Activated CD8-positive, alpha-beta T cell treated with anti-CD3 and anti-CD28 coated beads for 36 hours (primary cell): ENCODE measurements at regions of chr5 and their contacts with region 1.

Region 1: DNA sequence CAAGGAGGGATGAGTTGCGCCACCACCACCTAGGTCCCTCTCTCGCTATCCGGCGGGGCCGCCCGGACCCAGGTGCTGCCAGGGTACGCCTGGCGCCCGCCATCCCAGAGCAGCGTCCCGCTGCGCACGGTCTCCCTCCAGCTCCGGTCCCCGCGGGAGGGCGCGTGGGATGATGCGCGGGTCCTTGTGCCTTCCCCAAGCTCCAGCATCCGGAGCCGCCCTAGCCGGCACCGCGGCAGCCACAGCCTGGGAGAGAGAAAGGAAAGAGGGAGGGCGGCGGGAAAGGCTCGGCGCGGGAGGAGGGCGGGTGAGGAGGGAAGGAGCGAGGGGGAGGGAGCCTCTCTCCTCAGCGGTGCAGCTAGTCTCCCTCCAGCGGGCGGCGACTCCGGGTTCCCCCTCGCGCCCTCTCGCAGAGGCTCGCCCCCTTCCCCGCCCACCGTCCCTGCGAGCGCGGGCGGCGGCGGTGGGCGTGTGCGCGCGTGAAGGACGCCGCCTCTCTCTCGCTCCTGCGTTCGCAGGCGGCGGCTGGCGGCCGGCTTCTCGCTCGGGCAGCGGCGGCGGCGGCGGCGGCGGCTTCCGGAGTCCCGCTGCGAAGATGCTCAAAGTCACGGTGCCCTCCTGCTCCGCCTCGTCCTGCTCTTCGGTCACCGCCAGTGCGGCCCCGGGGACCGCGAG is at the start of gene CAMK4:
- DNase-seq: peak; percentile 74
- ATAC-seq: peak; percentile 65
- H3K4me3 Mint-ChIP-seq: peak within 1 kb of the TSS; percentile 96
- H3K27ac Mint-ChIP-seq: peak within 1 kb of the TSS; percentile 97
- H3K4me1 Mint-ChIP-seq: peaks cover 26% of the 10 kb centered on the region
- H3K27me3 Mint-ChIP-seq: no peaks in the 10 kb centered on the region
- CTCF ChIP-seq: peak; percentile 17
- total RNA-seq, gene CAMK4: 79.7 to 80.7 TPM

Region 2: GRCh38 chr5:111158105-111158744 is 65.8 kb before region 1 on chr5:
- CTCF ChIA-PET with region 1: interaction called, 12 read pairs
- POLR2A ChIA-PET with region 1: interaction called, 6 read pairs
- intact Hi-C with region 1: loop called (anchors 5 kb)
- DNase-seq: peak; percentile 90
- ATAC-seq: peak; percentile 84
- H3K4me3 Mint-ChIP-seq: no peak overlapping the region
- H3K27ac Mint-ChIP-seq: no peak overlapping the region
- H3K4me1 Mint-ChIP-seq: peaks cover 12% of the 10 kb centered on the region
- H3K27me3 Mint-ChIP-seq: peaks cover 2% of the 10 kb centered on the region
- CTCF ChIP-seq: peak; percentile 100

Region 3: DNA sequence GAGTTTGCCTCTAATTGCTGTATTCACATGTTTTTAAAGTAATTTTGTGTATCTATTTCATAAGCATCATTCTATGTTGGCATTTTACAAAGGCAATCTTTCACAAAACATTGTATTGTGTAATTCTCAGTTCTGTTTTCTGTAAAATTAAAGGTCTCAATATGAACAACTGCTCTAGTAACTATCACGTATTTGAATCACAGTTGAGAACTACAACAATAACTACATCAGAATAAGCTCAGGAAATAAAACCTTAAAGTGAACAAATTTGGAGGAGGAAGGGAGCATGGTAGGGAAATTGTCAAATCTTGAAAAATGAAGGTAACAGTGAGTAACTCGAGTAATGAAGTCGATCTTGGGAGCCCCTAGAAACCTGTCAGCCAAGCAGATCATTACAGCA is 22.3 kb before region 1 on chr5:
- CTCF ChIA-PET with region 1: interaction called, 10 read pairs
- POLR2A ChIA-PET with region 1: interaction called, 3 read pairs
- intact Hi-C with region 1: no loop called
- DNase-seq: no peak
- ATAC-seq: no peak
- H3K4me3 Mint-ChIP-seq: no peak overlapping the region
- H3K27ac Mint-ChIP-seq: no peak overlapping the region
- H3K4me1 Mint-ChIP-seq: peaks cover 18% of the 10 kb centered on the region
- H3K27me3 Mint-ChIP-seq: peaks cover 4% of the 10 kb centered on the region
- CTCF ChIP-seq: no peak

Region 4: DNA sequence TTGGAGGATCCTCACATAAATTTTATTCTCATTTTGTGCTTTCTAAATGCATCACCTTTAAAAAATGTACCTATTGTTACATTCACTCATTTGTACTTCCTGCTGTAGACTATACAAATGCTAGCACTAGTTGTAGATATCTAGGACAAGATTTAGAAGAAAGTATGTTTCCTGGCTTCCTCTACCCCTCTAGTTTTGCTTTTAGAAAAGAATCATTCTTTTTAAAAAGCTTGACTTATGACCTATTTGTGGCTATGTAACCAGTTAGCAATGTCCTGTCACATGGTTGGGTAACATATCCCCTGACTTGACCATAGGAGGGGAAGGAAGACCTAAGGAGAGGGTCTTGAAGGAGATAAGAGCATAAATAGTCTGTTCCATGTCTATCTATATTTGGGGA is 13.4 kb after region 1 on chr5:
- CTCF ChIA-PET with region 1: interaction called, 14 read pairs
- POLR2A ChIA-PET with region 1: interaction called, 46 read pairs
- intact Hi-C with region 1: loop called (anchors 1 kb)
- DNase-seq: no peak
- ATAC-seq: peak; percentile 10
- H3K4me3 Mint-ChIP-seq: peak overlapping the region; percentile 66
- H3K27ac Mint-ChIP-seq: peak overlapping the region; percentile 87
- H3K4me1 Mint-ChIP-seq: peaks cover 92% of the 10 kb centered on the region
- H3K27me3 Mint-ChIP-seq: no peaks in the 10 kb centered on the region
- CTCF ChIP-seq: no peak

Region 5: DNA sequence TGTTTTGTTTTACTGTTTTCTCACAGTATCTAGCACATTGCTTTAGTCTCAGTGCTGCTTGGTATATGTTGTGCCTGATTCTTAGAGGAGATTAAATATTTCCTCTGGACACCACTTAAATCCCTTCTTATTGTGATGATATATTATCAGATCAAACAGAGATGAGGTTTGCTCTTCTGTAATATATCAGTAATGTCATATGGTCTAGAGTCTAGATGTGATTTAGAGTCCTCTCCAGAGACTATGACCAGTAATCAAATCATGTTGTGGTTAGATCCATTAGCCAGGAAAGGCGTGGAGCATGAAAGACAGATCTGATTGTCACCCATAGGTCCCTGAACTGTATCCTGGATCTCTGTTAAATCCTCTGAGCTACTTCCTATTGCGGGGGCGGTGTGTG is 24.5 kb after region 1 on chr5:
- CTCF ChIA-PET with region 1: interaction called, 34 read pairs
- POLR2A ChIA-PET with region 1: interaction called, 176 read pairs
- intact Hi-C with region 1: no loop called
- DNase-seq: no peak
- ATAC-seq: no peak
- H3K4me3 Mint-ChIP-seq: peak overlapping the region; percentile 18
- H3K27ac Mint-ChIP-seq: peak overlapping the region; percentile 83
- H3K4me1 Mint-ChIP-seq: peaks cover 81% of the 10 kb centered on the region
- H3K27me3 Mint-ChIP-seq: no peaks in the 10 kb centered on the region
- CTCF ChIP-seq: no peak

Region 6: GRCh38 chr5:111254613-111255012 is 30.6 kb after region 1 on chr5:
- CTCF ChIA-PET with region 1: interaction called, 34 read pairs
- POLR2A ChIA-PET with region 1: interaction called, 176 read pairs
- intact Hi-C with region 1: no loop called
- DNase-seq: peak; percentile 95
- ATAC-seq: peak; percentile 85
- H3K4me3 Mint-ChIP-seq: peak overlapping the region; percentile 68
- H3K27ac Mint-ChIP-seq: peak overlapping the region; percentile 99
- H3K4me1 Mint-ChIP-seq: peaks cover 77% of the 10 kb centered on the region
- H3K27me3 Mint-ChIP-seq: no peaks in the 10 kb centered on the region
- CTCF ChIP-seq: no peak